ENCODE measurements at regions of chr22 and their contacts with region 1.

Region 1: GRCh38 chr22:41448189-41448808 is 1.7 kb upstream of the TOB2 start:
- DNase-seq: peak; percentile 77
- ATAC-seq: peak; percentile 64
- H3K4me3 Mint-ChIP-seq: peak overlapping the region; percentile 95
- H3K27ac Mint-ChIP-seq: peak overlapping the region; percentile 98
- H3K4me1 Mint-ChIP-seq: peaks cover 20% of the 10 kb centered on the region
- H3K27me3 Mint-ChIP-seq: no peaks in the 10 kb centered on the region
- CTCF ChIP-seq: no peak

Region 2: GRCh38 chr22:40694411-40694810 is 753.9 kb before region 1 on chr22:
- CTCF ChIA-PET with region 1: no interaction called
- POLR2A ChIA-PET with region 1: no interaction called
- intact Hi-C with region 1: no loop called
- DNase-seq: no peak
- ATAC-seq: no peak
- H3K4me3 Mint-ChIP-seq: no peak overlapping the region
- H3K27ac Mint-ChIP-seq: no peak overlapping the region
- H3K4me1 Mint-ChIP-seq: no peaks in the 10 kb centered on the region
- H3K27me3 Mint-ChIP-seq: peaks cover 8% of the 10 kb centered on the region
- CTCF ChIP-seq: no peak

Region 3: GRCh38 chr22:41285820-41286638 is 162.3 kb before region 1 on chr22 and contains the start of gene RANGAP1:
- CTCF ChIA-PET with region 1: no interaction called
- POLR2A ChIA-PET with region 1: interaction called, 20 read pairs
- intact Hi-C with region 1: loop called (anchors 2 kb)
- DNase-seq: peak; percentile 93
- ATAC-seq: peak; percentile 97
- H3K4me3 Mint-ChIP-seq: peak within 1 kb of the TSS; percentile 94
- H3K27ac Mint-ChIP-seq: peak within 1 kb of the TSS; percentile 98
- H3K4me1 Mint-ChIP-seq: peaks cover 28% of the 10 kb centered on the region
- H3K27me3 Mint-ChIP-seq: no peaks in the 10 kb centered on the region
- CTCF ChIP-seq: no peak
- total RNA-seq, gene RANGAP1: 48.9 and 56.4 TPM in 2 replicates

Region 4: DNA sequence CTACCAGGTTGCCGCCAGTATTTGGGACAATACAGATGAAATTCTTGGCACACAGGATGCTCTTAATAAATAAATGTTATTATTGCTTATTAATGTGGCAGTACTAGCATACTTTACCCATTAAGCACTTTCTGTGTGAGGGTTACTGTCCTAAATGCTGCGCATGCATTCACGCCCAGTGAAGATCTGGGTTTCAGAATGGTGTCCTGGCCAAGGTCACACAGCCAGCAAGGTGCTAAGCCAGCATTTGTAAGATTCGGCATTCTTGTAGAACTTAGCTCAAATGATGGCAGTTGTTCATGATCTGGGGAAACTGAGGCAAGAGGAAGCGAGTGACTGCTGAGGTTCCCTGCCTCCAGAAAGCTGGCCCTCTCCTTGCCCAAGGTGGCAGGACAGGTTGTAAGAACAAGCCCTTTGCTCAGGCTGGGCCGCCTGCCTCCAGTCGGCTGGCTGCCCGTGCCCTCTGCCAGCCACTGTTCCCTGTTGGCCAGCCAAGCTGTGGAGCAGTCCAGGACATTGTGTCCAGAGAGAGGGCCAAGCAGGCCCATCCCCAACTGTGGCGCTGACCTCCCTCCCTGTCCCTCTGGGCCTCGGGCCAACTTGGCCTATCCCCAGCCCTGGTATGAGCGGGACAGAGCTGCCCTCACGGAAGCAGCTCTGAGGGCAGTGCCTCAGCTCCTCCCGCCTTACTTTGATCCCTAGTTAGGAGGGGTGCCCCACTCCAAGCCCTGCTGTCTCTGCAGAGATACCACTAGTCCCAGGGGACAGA is 30.5 kb before region 1 on chr22:
- CTCF ChIA-PET with region 1: no interaction called
- POLR2A ChIA-PET with region 1: interaction called, 25 read pairs
- intact Hi-C with region 1: no loop called
- DNase-seq: no peak
- ATAC-seq: no peak
- H3K4me3 Mint-ChIP-seq: no peak overlapping the region
- H3K27ac Mint-ChIP-seq: no peak overlapping the region
- H3K4me1 Mint-ChIP-seq: peaks cover 52% of the 10 kb centered on the region
- H3K27me3 Mint-ChIP-seq: no peaks in the 10 kb centered on the region
- CTCF ChIP-seq: no peak

Region 5: DNA sequence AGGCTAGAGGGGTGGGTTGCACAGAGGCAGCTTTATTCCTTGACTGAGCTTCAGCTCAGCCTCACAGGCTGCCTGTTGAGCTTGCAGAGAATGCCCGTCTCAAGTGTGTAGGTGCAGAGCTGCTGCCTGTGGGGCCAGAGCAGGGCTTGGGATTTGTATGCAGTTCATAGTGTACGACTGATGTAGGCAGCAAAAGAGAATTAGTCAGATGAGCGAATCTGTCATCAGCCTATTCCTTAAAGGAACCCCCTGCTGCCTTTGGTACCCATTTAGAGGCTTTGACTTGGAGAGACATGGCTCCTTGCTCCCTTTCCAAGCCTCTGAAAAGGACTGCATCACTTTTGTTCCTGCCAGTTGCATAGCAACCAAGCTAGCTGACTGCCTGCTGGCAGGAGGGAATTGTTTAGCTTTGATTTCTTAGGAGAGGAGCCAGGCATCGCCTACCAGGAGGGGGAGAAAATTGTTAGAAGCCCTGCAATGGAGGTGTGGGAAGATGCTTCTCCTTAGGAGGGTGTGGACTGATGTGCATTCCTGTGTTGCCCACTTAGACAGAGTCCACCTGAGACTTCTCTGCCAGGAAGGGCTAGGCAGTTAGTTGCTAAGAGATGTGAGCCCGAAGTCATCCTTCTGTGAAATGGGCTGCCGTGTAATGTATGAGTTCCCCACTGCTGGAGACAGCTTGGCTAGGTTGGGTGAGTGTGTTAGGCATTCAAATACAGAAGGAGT is 31.5 kb after region 1 on chr22:
- CTCF ChIA-PET with region 1: interaction called, 3 read pairs
- POLR2A ChIA-PET with region 1: interaction called, 584 read pairs
- intact Hi-C with region 1: loop called (anchors 1 kb)
- DNase-seq: no peak
- ATAC-seq: no peak
- H3K4me3 Mint-ChIP-seq: peak overlapping the region; percentile 79
- H3K27ac Mint-ChIP-seq: peak overlapping the region; percentile 96
- H3K4me1 Mint-ChIP-seq: peaks cover 87% of the 10 kb centered on the region
- H3K27me3 Mint-ChIP-seq: no peaks in the 10 kb centered on the region
- CTCF ChIP-seq: no peak

Region 6: DNA sequence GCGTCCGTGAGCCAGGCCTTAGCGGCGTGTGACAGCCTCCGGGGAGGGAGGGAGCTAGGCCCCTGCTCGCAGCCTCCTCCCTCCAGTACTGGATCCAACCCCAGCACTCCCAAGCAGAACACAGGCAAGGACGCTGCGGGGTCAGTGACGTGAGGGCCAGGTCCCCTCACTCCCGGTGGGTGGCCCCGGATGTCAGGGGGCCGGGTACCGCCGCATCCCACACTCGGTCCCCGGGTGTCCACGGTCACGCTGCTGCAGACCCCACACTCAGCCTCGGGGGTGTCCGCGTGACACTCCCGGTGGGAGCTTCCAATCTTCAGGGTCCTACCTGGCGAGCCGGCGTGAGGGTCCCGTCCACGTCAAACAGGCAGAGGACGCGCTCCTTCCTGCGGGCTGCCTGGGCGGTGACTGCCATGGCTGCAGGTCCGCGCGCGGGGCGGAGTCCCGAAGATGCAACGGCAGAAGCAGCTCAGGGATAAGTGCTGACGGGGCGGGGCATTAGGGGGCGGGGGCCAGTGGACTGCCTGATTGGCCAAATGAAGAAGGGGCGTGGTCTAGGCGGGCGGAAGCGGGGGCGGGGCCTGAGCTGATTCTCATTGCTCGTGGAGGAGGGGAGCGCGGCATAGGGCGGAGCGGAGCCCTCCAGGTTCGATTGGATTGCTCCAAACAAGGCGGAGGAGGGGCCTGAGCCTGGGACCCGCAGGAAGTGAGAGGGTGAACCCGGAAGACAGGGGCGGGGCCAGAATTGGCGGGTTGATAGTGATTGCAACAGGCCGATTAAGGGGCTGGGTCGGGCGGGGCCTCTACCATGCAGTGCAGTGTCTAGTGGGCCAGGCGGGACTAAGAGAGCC is 141.3 kb after region 1 on chr22 and contains the start of gene PMM1:
- CTCF ChIA-PET with region 1: no interaction called
- POLR2A ChIA-PET with region 1: interaction called, 6 read pairs
- intact Hi-C with region 1: loop called (anchors 1 kb)
- DNase-seq: peak; percentile 98
- ATAC-seq: peak; percentile 98
- H3K4me3 Mint-ChIP-seq: peak within 1 kb of the TSS; percentile 91
- H3K27ac Mint-ChIP-seq: peak within 1 kb of the TSS; percentile 88
- H3K4me1 Mint-ChIP-seq: peaks cover 12% of the 10 kb centered on the region
- H3K27me3 Mint-ChIP-seq: no peaks in the 10 kb centered on the region
- CTCF ChIP-seq: no peak
- total RNA-seq, gene PMM1: 13.0 and 15.1 TPM in 2 replicates

Region 7: DNA sequence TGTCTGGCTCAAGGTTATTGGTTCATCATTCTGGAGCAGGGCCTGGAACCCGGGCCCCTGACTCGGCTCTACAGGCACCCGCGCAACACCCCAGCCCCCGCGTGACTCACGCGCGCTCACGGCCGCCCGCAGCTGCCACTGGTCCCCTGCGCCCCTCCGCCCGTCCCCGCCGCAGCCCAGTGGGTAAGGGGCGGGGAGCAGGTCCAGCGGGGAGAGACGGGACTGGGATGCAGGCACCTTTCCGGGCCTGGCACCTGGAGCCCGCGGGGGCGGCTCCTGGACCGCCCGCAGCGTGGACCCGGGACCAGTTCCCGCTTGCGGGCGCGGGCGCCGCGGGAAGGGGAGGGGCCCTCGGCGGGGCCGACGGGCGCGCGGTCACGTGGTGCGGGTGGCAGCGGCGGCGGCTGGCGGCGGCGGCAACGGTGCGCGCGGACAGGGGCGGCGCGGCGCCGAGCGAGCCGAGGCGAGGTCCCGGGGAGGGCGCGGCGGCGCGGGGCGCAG is 528.2 kb after region 1 on chr22:
- CTCF ChIA-PET with region 1: no interaction called
- POLR2A ChIA-PET with region 1: no interaction called
- intact Hi-C with region 1: no loop called
- DNase-seq: peak; percentile 60
- ATAC-seq: peak; percentile 75
- H3K4me3 Mint-ChIP-seq: peak overlapping the region; percentile 49
- H3K27ac Mint-ChIP-seq: no peak overlapping the region
- H3K4me1 Mint-ChIP-seq: peaks cover 12% of the 10 kb centered on the region
- H3K27me3 Mint-ChIP-seq: peaks cover 43% of the 10 kb centered on the region
- CTCF ChIP-seq: no peak